ENCODE measurements at regions of chr6 and their contacts with region 1.

Region 1: GRCh38 chr6:70369332-70369950 is 43.9 kb upstream of the FAM135A start:
- DNase-seq: peak; percentile 76
- ATAC-seq: peak; percentile 84
- H3K4me3 Mint-ChIP-seq: no peak overlapping the region
- H3K27ac Mint-ChIP-seq: no peak overlapping the region
- H3K4me1 Mint-ChIP-seq: no peaks in the 10 kb centered on the region
- H3K27me3 Mint-ChIP-seq: peaks cover 36% of the 10 kb centered on the region

Region 2: DNA sequence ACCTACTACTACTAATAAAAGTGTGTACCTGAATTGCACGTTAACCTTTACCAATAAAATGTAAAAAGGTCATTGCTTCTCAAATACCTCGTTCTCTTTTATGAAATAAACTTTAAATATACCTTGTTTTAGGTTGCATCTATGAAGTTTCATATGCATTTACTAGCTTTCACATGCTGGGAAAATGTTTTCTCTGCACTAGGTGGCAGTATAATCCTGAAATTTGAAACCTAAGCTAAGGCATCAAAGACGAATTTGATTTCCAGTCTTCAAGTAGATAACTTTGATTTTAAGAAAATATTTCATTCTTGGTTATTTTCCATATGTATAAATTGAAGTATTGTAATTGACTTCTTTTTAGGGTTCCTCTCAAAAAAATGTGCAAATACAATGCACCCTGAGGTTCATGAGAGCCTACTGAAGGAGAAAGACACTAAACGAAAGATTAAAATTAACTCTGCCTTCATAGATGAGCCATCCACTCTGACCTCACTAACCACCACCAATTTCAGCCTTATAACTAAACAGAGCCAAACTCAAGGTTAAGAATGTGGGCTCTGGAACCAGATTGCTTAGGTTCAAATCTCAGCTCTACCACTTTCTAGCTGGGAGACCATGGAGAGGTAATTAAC is 59.3 kb before region 1 on chr6:
- CTCF ChIA-PET with region 1: interaction called, 72 read pairs
- POLR2A ChIA-PET with region 1: no interaction called
- DNase-seq: no peak
- ATAC-seq: no peak
- H3K4me3 Mint-ChIP-seq: no peak overlapping the region
- H3K27ac Mint-ChIP-seq: no peak overlapping the region
- H3K4me1 Mint-ChIP-seq: no peaks in the 10 kb centered on the region
- H3K27me3 Mint-ChIP-seq: peaks cover 20% of the 10 kb centered on the region

Region 3: DNA sequence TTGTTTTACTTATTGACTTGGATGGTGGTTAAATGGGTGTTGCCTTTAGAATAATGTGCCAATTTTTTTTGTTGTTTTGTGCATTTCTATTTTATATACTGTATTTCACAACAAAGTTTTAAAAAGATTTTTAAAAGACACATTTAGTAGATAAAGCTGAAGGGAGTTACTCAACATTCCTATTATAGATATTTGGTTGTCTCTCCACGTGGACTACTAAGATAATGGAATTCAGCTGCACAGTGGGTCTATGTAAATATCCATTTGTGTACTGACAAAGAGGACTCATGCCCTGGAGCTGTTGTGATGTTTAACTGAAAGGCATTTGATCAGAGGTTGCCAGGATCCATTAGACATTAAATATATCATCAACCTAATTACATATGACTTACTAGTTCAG is 20.6 kb after region 1 on chr6:
- CTCF ChIA-PET with region 1: interaction called, 17 read pairs
- POLR2A ChIA-PET with region 1: no interaction called
- DNase-seq: no peak
- ATAC-seq: no peak
- H3K4me3 Mint-ChIP-seq: no peak overlapping the region
- H3K27ac Mint-ChIP-seq: no peak overlapping the region
- H3K4me1 Mint-ChIP-seq: no peaks in the 10 kb centered on the region
- H3K27me3 Mint-ChIP-seq: peaks cover 15% of the 10 kb centered on the region

Measured in activated CD8-positive, alpha-beta T cell treated with anti-CD3 and anti-CD28 coated beads, Interleukin-2, amount 10 ng/mL, durations not matched to agents 7 days and 5 days (primary cell).